H1 (cell line): ENCODE measurements at regions of chr14 and their contacts with region 1.

Region 1: DNA sequence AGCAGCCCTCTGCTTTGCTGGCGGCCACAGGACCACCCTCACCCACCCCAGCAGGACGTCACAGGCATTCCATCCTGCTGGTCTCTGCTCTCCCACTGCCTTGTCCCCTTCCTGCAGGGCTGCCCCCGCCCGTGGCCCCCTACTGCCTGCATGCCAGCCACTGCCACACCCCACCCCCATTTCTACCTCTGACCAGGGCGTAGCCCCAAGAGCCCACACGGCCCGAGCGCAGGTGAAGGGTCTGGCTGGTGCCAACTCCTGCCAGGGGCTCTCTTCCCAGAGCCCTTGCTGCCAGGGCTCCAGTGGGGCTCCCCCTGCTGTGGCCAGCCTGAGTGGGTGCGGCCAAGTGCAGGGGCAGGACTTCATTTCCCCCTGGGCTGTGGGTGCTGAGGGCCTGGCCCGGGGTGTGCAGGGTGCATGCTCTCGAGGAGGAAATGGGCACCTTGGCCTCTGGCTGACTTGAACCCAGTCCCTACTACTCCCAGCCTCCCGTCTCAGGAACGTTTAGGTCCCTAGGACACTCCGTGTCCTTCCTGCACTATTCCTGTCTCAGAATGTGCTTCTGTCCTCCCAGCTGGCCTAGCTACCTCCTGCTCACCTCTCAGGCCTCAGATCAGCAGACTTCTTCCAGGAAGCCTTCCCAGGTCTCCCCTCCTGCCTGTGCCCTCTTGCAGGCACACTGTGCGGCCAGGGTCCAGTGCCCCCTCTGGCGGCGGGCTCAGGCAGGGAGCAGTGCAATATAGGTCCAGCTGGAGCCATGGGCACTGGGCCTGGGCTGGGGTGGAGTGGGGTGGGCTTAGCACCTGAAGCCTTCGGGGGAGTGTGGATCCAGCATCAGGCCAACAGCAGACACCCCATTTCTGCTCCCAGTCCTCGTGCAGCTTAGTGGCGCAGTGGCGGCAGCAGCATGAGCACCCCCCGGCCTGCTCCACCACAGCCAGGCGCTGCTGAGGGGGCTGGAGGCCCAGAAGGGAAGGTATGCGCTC is 1.4 kb downstream of the LBHD2 start:
- DNase-seq: peak in 1 of 2 experiments; percentile 84
- H3K4me3 ChIP-seq: no peak overlapping the region
- H3K27ac ChIP-seq: no peak overlapping the region
- H3K4me1 ChIP-seq: peaks cover 0 to 3% (median 1%) of the 10 kb centered on the region in 4 experiments; a peak in 3 of 7 replicates
- H3K27me3 ChIP-seq: peaks cover 3 to 20% (median 16%) of the 10 kb centered on the region in 4 experiments; a peak in 6 of 7 replicates
- CTCF ChIP-seq: peak in 2 of 3 experiments; percentile 76 to 81; a peak in 3 of 4 replicates
- EP300 ChIP-seq: no peak
- POLR2A ChIP-seq: no peak
- RAD21 ChIP-seq: peak; percentile 40 to 62; a peak in 3 of 4 replicates

Region 2: GRCh38 chr14:103099081-103099732 is 13.8 kb after region 1 on chr14:
- CTCF ChIA-PET with region 1: interaction called, 43 read pairs
- POLR2A ChIA-PET with region 1: interaction called, 4 read pairs
- DNase-seq: no peak
- H3K4me3 ChIP-seq: no peak overlapping the region
- H3K27ac ChIP-seq: no peak overlapping the region
- H3K4me1 ChIP-seq: peaks cover 0 to 28% (median 12%) of the 10 kb centered on the region in 4 experiments; a peak in 6 of 7 replicates
- H3K27me3 ChIP-seq: peaks cover 4 to 30% (median 25%) of the 10 kb centered on the region in 4 experiments
- CTCF ChIP-seq: no peak
- EP300 ChIP-seq: no peak
- POLR2A ChIP-seq: no peak
- RAD21 ChIP-seq: no peak

Region 3: DNA sequence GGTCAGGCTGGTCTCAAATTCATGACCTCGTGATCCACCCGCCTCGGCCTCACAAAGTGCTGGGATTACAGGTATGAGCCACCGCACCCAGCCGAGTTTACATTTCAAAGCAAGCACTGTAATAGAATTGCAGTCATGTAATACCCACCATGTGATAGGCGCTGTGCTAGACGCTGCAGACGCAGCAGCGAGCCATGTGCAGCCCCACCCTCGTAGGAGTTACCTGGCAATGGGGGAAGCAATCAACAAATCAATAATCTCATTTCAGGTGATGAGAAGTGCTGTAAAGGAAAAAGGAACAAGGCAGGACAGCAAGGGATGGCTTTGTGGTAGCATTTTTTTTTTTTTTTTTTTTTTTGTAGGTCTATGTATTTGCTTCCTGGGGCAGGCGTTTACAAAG is 110.4 kb after region 1 on chr14:
- CTCF ChIA-PET with region 1: no interaction called
- POLR2A ChIA-PET with region 1: no interaction called
- DNase-seq: no peak
- H3K4me3 ChIP-seq: no peak overlapping the region
- H3K27ac ChIP-seq: no peak overlapping the region
- H3K4me1 ChIP-seq: peaks cover 0 to 3% (median 0%) of the 10 kb centered on the region in 4 experiments; a peak in 1 of 7 replicates
- H3K27me3 ChIP-seq: no peaks in the 10 kb centered on the region
- CTCF ChIP-seq: no peak
- EP300 ChIP-seq: no peak
- POLR2A ChIP-seq: no peak
- RAD21 ChIP-seq: no peak

Region 4: DNA sequence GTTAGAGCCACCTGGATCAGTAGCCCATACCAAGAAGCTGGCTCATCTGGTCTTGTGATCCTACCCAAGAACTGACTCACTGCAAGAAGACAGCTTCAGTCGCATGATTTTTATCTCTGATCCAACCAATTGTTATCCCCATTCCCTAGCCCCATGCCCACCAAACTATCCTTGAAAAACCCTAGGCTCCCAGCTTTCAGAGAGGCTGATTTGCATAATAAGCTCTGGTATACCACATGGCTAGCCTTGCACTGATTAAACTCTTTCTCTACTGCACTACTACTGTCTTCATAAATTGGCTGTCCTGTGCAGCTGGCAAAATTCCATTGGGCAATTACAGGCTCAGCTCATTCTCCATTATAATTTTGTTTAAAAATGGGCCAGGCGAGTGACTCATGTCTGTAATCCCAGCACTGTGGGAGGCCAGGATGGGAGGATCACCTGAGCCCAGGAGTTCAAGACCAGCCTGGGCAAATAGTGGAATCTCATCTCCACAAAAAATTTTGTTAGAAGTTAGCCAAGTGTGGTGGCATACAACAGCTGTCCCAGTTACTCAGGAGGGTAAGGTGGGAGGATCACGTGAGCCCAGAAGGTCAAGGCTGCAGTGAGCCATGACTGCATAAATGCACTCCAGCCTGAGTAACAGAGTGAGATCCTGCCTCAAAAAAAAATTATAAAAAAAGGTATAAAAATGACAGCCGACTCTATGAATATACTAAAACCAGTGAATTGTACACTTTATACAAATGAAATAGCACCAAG is 172.0 kb after region 1 on chr14:
- CTCF ChIA-PET with region 1: no interaction called
- POLR2A ChIA-PET with region 1: no interaction called
- DNase-seq: peak in 1 of 2 experiments; percentile 10
- H3K4me3 ChIP-seq: no peak overlapping the region
- H3K27ac ChIP-seq: no peak overlapping the region
- H3K4me1 ChIP-seq: no peaks in the 10 kb centered on the region; a peak in 1 of 7 replicates
- H3K27me3 ChIP-seq: no peaks in the 10 kb centered on the region
- CTCF ChIP-seq: no peak
- EP300 ChIP-seq: no peak
- POLR2A ChIP-seq: no peak
- RAD21 ChIP-seq: no peak